Calu3 (cell line): ENCODE measurements at regions of chr1 and their contacts with region 1.

Region 1: GRCh38 chr1:203340112-203340804 is 10.7 kb downstream of the FMOD start:
- DNase-seq: peak; percentile 77
- H3K4me3 Mint-ChIP-seq: no peak overlapping the region
- H3K27ac Mint-ChIP-seq: no peak overlapping the region
- H3K4me1 Mint-ChIP-seq: no peaks in the 10 kb centered on the region
- H3K27me3 Mint-ChIP-seq: peaks cover 87% of the 10 kb centered on the region
- CTCF ChIP-seq: peak; percentile 81

Region 2: DNA sequence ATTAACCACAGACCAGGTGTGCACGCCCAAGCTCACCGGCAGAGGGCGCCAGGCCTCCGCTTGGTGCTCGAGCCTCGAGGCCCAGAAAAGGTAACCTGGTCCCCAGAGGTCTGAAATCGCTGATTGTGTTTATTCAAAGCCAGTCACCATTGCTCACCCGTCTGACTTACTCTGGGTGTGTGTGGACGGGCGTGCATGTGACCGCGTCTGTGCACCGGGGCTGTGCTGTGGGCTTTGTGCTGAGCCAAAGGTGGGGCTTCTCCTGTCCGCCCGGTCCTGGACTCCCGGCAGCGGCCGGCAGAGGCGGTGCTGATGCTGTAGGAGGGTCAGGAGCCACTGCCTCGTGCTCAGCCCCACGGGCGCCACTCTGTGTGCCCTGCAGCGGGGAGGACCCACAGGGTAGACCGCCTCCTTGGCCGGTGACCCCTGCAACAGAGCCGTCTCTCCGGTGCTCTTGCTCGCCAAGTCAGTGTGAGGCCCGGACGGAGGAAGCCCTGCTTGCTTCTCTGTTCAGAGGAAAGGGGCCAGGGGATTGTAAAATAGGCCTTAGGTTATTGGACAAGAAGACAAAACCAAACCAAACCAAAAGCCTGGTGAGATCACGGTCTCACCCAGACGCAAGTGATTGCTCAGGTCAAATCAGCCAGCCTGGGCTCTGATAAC is 66.9 kb before region 1 on chr1:
- CTCF ChIA-PET with region 1: interaction called, 24 read pairs
- intact Hi-C with region 1: loop called (anchors 1 kb)
- DNase-seq: peak; percentile 94
- H3K4me3 Mint-ChIP-seq: peak overlapping the region; percentile 40
- H3K27ac Mint-ChIP-seq: no peak overlapping the region
- H3K4me1 Mint-ChIP-seq: no peaks in the 10 kb centered on the region
- H3K27me3 Mint-ChIP-seq: peaks cover 34% of the 10 kb centered on the region
- CTCF ChIP-seq: peak; percentile 96

Region 3: GRCh38 chr1:203299169-203299568 is 41.1 kb before region 1 on chr1:
- CTCF ChIA-PET with region 1: no interaction called
- intact Hi-C with region 1: no loop called
- DNase-seq: no peak
- H3K4me3 Mint-ChIP-seq: no peak overlapping the region
- H3K27ac Mint-ChIP-seq: no peak overlapping the region
- H3K4me1 Mint-ChIP-seq: peaks cover 10% of the 10 kb centered on the region
- H3K27me3 Mint-ChIP-seq: peaks cover 81% of the 10 kb centered on the region
- CTCF ChIP-seq: no peak

Region 4: GRCh38 chr1:203326830-203327683 is 13.2 kb before region 1 on chr1:
- CTCF ChIA-PET with region 1: interaction called, 17 read pairs
- intact Hi-C with region 1: no loop called
- DNase-seq: peak; percentile 96
- H3K4me3 Mint-ChIP-seq: peak overlapping the region; percentile 71
- H3K27ac Mint-ChIP-seq: peak overlapping the region; percentile 70
- H3K4me1 Mint-ChIP-seq: peaks cover 21% of the 10 kb centered on the region
- H3K27me3 Mint-ChIP-seq: peaks cover 54% of the 10 kb centered on the region
- CTCF ChIP-seq: no peak

Region 5: GRCh38 chr1:203440771-203441170 is 100.5 kb after region 1 on chr1:
- CTCF ChIA-PET with region 1: interaction called, 6 read pairs
- intact Hi-C with region 1: loop called (anchors 5 kb)
- DNase-seq: peak; percentile 35
- H3K4me3 Mint-ChIP-seq: no peak overlapping the region
- H3K27ac Mint-ChIP-seq: no peak overlapping the region
- H3K4me1 Mint-ChIP-seq: no peaks in the 10 kb centered on the region
- H3K27me3 Mint-ChIP-seq: peaks cover 90% of the 10 kb centered on the region
- CTCF ChIP-seq: no peak

Region 6: DNA sequence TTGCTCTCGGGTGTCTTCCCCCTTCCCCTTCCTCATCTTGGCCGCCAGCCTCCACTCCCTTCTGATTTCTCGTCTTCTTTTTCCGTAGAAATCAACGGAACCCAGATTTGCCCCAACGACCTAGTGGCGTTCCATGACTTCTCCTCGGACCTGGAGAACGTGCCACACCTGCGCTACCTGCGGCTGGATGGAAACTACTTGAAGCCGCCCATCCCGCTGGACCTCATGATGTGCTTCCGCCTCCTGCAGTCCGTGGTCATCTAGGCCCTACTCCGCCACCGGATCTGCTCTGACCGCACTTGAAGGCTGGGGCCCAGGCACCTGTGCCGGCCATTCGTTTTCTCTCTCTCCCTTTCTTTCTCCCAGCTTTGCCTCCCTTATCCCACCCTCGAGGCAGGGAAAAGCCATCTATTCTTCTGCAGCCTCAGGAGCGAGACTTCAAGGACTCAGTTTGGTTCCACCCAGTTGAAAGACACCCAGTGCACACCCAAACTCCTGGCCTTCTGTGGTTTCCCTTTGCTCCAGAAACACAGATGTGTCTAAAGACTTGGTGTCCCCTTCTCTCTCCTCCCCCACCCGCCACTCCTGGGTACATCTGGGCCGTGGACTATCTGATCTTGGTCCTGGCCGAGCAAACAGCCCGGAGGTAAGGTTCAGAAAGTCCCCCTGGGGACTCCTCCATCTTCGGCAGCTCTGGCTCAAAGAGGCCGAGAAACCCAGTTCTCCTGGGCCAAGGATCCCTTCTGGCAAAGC is 146.5 kb after region 1 on chr1:
- CTCF ChIA-PET with region 1: interaction called, 15 read pairs
- intact Hi-C with region 1: loop called (anchors 2 kb)
- DNase-seq: no peak
- H3K4me3 Mint-ChIP-seq: peak overlapping the region; percentile 51
- H3K27ac Mint-ChIP-seq: no peak overlapping the region
- H3K4me1 Mint-ChIP-seq: no peaks in the 10 kb centered on the region
- H3K27me3 Mint-ChIP-seq: peaks cover 48% of the 10 kb centered on the region
- CTCF ChIP-seq: no peak

Region 7: GRCh38 chr1:203702130-203702577 is 361.9 kb after region 1 on chr1:
- CTCF ChIA-PET with region 1: interaction called, 7 read pairs
- intact Hi-C with region 1: loop called (anchors 2 kb)
- DNase-seq: peak; percentile 55
- H3K4me3 Mint-ChIP-seq: no peak overlapping the region
- H3K27ac Mint-ChIP-seq: no peak overlapping the region
- H3K4me1 Mint-ChIP-seq: no peaks in the 10 kb centered on the region
- H3K27me3 Mint-ChIP-seq: peaks cover 15% of the 10 kb centered on the region
- CTCF ChIP-seq: peak; percentile 97